ENCODE measurements at regions of chr18 and their contacts with region 1.

Region 1: DNA sequence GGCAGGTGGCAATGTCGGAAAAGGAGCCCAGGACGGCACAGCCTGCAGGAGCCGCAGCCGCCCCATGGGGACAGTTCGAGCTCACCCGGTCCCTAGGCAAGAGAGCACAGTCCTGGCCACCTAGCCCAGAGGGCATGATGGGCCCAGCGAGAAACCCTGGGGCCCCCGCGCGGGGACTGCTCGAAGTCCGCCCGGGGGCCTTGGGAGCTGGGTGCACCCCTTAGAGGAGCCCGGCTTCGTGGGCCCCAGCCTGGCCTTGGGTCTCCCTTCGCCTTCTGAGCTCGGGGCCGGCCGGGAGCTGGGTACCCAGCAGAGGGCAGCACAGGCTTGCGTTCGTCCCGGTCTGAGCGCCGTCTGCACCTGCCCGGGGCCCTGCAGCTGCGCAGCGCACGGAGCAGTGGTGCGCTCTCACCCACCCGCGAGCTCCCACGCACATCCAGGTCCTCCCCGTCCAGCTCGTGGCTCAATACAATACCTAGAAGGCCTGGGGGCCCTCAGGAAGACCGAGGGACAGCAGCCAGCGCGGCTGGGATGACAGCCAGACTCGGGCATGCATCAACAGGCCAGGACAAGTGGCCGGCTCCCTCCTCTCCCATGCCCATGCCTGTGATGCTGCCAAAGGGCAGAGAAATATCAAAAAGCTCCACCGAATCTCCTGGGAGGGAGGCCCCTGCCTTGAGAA is 96.2 kb upstream of the ZNF532 start:
- DNase-seq: peak; percentile 35
- ATAC-seq: peak; percentile 98
- H3K4me3 ChIP-seq: peak overlapping the region; percentile 49 to 68 (median 49); a peak in 5 of 6 replicates
- H3K27ac ChIP-seq: no peak overlapping the region
- H3K4me1 ChIP-seq: peaks cover 52% of the 10 kb centered on the region
- H3K27me3 ChIP-seq: peaks cover 1 to 21% of the 10 kb centered on the region in 2 experiments; a peak in 2 of 5 replicates
- CTCF ChIP-seq: peak; percentile 97
- EP300 ChIP-seq: no peak
- POLR2A ChIP-seq: no peak
- RAD21 ChIP-seq: peak; percentile 86

Region 2: DNA sequence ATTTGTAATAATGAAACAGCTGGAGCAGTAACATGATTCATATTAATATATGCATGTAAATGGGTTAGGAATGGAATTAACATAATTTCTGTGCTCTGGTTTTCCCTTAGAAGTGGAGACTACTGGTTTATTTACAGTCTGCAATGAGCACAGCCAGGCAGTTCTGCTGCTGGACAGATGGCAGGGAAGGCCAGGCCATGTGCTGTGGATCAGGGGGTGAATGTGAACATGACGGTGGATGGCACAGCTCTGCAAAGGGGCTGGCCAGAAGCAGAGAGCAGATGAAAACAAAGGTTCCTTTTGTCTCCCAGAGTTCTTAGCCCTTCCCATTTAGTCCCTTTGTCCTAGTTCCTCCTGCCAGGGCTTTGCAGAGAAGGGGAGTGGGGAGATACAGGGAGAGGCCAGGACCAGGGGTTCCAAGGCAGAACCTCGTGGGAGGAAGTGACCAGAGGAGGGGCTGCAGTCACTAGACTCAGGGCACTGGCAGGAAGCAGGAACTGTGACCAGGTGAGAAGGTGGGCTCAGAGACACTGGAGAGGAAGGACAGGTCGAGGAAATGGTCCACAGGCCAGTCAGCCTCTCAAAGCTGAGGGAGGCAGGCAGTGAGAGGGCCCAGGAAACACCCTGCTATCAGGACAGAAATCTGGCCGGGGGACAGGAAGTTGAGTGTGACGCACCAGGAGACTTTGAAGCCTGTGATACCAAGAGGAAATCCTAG is 852.4 kb before region 1 on chr18:
- CTCF ChIA-PET with region 1: no interaction called
- POLR2A ChIA-PET with region 1: no interaction called
- in situ Hi-C with region 1: loop called (anchors 25 kb)
- intact Hi-C with region 1: no loop called
- DNase-seq: peak; percentile 17
- ATAC-seq: peak; percentile 76
- H3K4me3 ChIP-seq: peak overlapping the region in 2 of 3 experiments; percentile 32 to 53; a peak in 3 of 6 replicates
- H3K27ac ChIP-seq: no peak overlapping the region
- H3K4me1 ChIP-seq: peaks cover 17% of the 10 kb centered on the region
- H3K27me3 ChIP-seq: no peaks in the 10 kb centered on the region
- CTCF ChIP-seq: no peak
- EP300 ChIP-seq: no peak
- POLR2A ChIP-seq: no peak
- RAD21 ChIP-seq: no peak

Region 3: GRCh38 chr18:58402247-58402646 is 366.2 kb before region 1 on chr18:
- CTCF ChIA-PET with region 1: interaction called, 4 read pairs
- POLR2A ChIA-PET with region 1: no interaction called
- in situ Hi-C with region 1: loop called (anchors 5 kb)
- intact Hi-C with region 1: loop called (anchors 2 kb)
- DNase-seq: peak; percentile 58
- ATAC-seq: no peak
- H3K4me3 ChIP-seq: no peak overlapping the region
- H3K27ac ChIP-seq: peak overlapping the region; percentile 98
- H3K4me1 ChIP-seq: peaks cover 100% of the 10 kb centered on the region
- H3K27me3 ChIP-seq: no peaks in the 10 kb centered on the region
- CTCF ChIP-seq: no peak
- EP300 ChIP-seq: no peak
- POLR2A ChIP-seq: no peak
- RAD21 ChIP-seq: no peak

Region 4: GRCh38 chr18:58745914-58746313 is 22.5 kb before region 1 on chr18:
- CTCF ChIA-PET with region 1: no interaction called
- POLR2A ChIA-PET with region 1: no interaction called
- in situ Hi-C with region 1: no loop called
- intact Hi-C with region 1: no loop called
- DNase-seq: no peak
- ATAC-seq: no peak
- H3K4me3 ChIP-seq: no peak overlapping the region
- H3K27ac ChIP-seq: no peak overlapping the region
- H3K4me1 ChIP-seq: no peaks in the 10 kb centered on the region
- H3K27me3 ChIP-seq: no peaks in the 10 kb centered on the region; a peak in 1 of 5 replicates
- CTCF ChIP-seq: no peak
- EP300 ChIP-seq: no peak
- POLR2A ChIP-seq: no peak
- RAD21 ChIP-seq: no peak

Region 5: GRCh38 chr18:59056706-59057492 is 288.5 kb after region 1 on chr18:
- CTCF ChIA-PET with region 1: interaction called, 7 read pairs
- POLR2A ChIA-PET with region 1: no interaction called
- in situ Hi-C with region 1: no loop called
- intact Hi-C with region 1: loop called (anchors 1 kb)
- DNase-seq: peak; percentile 36
- ATAC-seq: peak; percentile 81
- H3K4me3 ChIP-seq: no peak overlapping the region
- H3K27ac ChIP-seq: no peak overlapping the region
- H3K4me1 ChIP-seq: no peaks in the 10 kb centered on the region
- H3K27me3 ChIP-seq: peaks cover 0 to 27% of the 10 kb centered on the region in 2 experiments; a peak in 3 of 5 replicates
- CTCF ChIP-seq: peak; percentile 83
- EP300 ChIP-seq: no peak
- POLR2A ChIP-seq: no peak
- RAD21 ChIP-seq: peak; percentile 67

Region 6: GRCh38 chr18:59070181-59070912 is 301.9 kb after region 1 on chr18:
- CTCF ChIA-PET with region 1: interaction called, 21 read pairs
- POLR2A ChIA-PET with region 1: no interaction called
- in situ Hi-C with region 1: no loop called
- intact Hi-C with region 1: loop called (anchors 1 kb)
- DNase-seq: peak; percentile 54
- ATAC-seq: peak; percentile 95
- H3K4me3 ChIP-seq: no peak overlapping the region
- H3K27ac ChIP-seq: no peak overlapping the region
- H3K4me1 ChIP-seq: no peaks in the 10 kb centered on the region
- H3K27me3 ChIP-seq: no peaks in the 10 kb centered on the region
- CTCF ChIP-seq: peak; percentile 86
- EP300 ChIP-seq: peak in 1 of 2 experiments; percentile 13; a peak in 1 of 4 replicates
- POLR2A ChIP-seq: no peak
- RAD21 ChIP-seq: peak; percentile 52